GM18951 (cell line): ENCODE measurements at regions of chr2 and their contacts with region 1.

Region 1: GRCh38 chr2:66574701-66575624 is 140.0 kb downstream of the MEIS1 start:
- POLR2A ChIP-seq: no peak

Region 2: DNA sequence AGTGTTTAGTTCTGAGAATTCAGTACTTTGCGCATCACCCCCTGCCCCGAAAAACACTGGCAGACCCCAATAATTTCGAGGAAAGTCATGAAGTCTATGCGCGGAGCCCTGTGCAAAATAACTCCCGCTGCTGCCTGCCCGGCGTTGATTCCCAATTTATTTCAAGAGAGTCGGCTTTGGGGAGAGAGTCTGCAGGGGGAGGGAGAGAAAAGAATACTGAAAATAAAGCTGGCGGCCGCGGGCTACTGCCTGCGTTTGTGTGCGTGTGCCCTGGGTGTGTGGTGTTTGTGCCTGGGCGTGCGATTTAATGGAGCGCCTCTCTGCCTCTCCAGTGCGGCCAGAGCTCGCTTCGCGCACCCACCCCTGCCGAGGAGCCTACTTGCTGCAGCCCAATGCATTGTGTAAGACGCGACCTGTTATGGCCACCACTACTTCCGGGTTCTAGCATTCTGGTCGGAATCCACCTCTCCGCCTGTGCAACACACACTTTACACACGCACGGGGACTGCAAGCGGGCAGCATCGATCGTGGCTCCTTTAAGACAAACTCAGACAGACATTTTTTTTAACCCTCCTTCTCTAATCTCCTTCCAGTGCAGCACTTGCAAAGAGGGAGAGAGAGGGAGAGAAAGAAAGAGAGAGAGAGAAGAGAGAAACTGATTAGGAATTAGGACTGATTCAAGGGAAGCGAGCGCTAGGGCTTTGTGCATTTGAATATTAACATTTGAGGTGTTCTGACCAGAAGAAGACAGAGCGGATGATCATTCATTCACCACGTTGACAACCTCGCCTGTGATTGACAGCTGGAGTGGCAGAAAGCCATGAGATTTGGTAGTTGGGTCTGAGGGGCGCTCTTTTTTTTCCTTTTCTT is 140.0 kb before region 1 on chr2 and contains the start of gene MEIS1:
- in situ Hi-C with region 1: loop called (anchors 25 kb)
- POLR2A ChIP-seq: no peak